ENCODE measurements at regions of chr17 and their contacts with region 1.

Region 1: GRCh38 chr17:78186692-78187595 is at the starts of genes AFMID and TK1:
- DNase-seq: peak; percentile 98 to 100
- H3K4me3 ChIP-seq: peak within 1 kb of the TSS; percentile 87
- H3K4me3 Mint-ChIP-seq: peak within 1 kb of the TSS; percentile 72
- H3K27ac Mint-ChIP-seq: peak within 1 kb of the TSS; percentile 75
- H3K4me1 ChIP-seq: peaks cover 15% of the 10 kb centered on the region
- H3K4me1 Mint-ChIP-seq: peaks cover 22% of the 10 kb centered on the region
- H3K27me3 ChIP-seq: no peaks in the 10 kb centered on the region
- H3K27me3 Mint-ChIP-seq: no peaks in the 10 kb centered on the region
- CTCF ChIP-seq: peak; percentile 65 to 90
- total RNA-seq, gene AFMID: 68.5 and 83.0 TPM in 2 replicates
- total RNA-seq, gene TK1: 171 and 190 TPM in 2 replicates

Region 2: DNA sequence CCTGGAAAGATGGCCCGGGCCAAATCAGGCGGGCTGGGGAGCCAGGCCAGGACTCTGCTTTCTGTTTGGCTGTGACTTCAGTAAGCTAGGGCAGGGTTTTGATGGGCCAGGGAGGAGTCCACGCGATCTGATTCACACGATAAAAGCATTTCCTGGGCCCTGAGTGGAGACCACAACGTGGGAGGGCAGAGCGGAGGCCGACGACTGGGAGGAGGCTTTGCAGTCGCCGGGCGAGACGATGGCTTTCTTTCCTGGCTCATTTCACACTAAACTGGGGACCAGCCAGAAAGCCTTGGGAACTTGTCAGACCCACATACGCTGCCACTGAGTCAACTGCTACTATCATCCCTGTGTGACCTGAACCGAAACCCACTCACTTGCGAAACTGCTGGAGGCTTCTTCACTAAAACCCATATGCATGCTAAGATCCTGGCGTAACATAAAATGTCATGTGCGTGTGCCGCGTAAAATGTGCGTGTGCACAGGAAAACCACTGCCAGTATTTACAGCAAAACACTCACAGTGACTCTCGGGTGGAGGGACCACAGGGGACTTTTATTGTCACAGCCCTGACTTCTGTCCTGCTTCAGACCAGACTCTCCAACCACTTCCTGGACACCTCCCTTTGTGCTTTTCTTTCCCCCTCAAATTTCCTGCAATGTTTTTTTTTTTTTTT is 1671.5 kb before region 1 on chr17:
- CTCF ChIA-PET with region 1: no interaction called
- POLR2A ChIA-PET with region 1: no interaction called
- intact Hi-C with region 1: no loop called
- DNase-seq: no peak
- H3K4me3 ChIP-seq: no peak overlapping the region
- H3K4me3 Mint-ChIP-seq: no peak overlapping the region
- H3K27ac Mint-ChIP-seq: no peak overlapping the region
- H3K4me1 ChIP-seq: no peaks in the 10 kb centered on the region
- H3K4me1 Mint-ChIP-seq: no peaks in the 10 kb centered on the region
- H3K27me3 ChIP-seq: no peaks in the 10 kb centered on the region
- H3K27me3 Mint-ChIP-seq: no peaks in the 10 kb centered on the region
- CTCF ChIP-seq: no peak

Region 3: GRCh38 chr17:78040440-78041385 is 146.2 kb before region 1 on chr17:
- CTCF ChIA-PET with region 1: no interaction called
- POLR2A ChIA-PET with region 1: no interaction called
- intact Hi-C with region 1: no loop called
- DNase-seq: peak; percentile 76 to 77
- H3K4me3 ChIP-seq: peak overlapping the region; percentile 52
- H3K4me3 Mint-ChIP-seq: peak overlapping the region; percentile 83
- H3K27ac Mint-ChIP-seq: peak overlapping the region; percentile 90
- H3K4me1 ChIP-seq: peaks cover 9% of the 10 kb centered on the region
- H3K4me1 Mint-ChIP-seq: peaks cover 5% of the 10 kb centered on the region
- H3K27me3 ChIP-seq: no peaks in the 10 kb centered on the region
- H3K27me3 Mint-ChIP-seq: no peaks in the 10 kb centered on the region
- CTCF ChIP-seq: peak; percentile 16 to 30

Region 4: DNA sequence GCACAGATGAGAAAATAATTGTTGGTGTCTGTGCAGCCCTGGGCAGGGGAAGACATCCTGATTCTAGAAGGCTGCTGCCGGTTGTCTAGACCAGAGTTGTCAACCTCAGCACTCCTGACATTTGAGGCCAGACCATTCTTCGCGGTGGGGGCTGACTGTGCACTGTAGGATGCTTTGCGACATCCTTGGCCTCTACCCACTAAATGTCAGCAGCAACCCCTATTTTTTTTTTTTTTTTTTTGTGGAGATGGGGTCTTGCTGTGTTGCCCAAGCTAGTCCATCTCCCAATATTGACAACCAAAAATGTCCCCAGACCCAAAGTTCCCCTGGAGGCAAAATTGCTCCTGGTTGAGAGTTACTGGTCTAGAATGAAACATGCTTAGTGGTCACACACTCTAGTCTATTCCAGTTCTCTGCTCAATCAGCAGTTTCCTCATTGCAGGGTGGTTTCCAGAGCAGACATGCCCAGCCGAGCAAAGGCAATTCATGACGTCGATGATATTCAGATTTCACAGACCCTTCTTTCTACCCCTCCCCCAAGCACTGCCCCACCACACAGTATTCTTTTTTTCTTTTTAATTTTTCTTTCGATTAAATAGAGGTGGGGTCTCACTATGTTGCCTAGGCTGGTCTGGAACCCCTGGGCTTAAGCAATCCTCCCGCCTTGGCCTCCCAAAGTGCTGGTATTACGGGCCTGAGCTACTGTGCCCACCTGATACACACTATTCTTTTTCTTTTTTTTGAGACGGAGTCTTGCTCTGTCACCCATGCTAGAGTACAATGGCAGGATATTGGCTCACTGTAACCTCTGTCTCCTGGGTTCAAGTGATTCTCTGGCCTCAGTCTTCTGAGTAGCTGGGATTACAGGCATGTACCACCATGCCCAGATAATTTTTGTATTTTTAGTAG is 31.8 kb before region 1 on chr17:
- CTCF ChIA-PET with region 1: interaction called, 5 read pairs
- POLR2A ChIA-PET with region 1: interaction called, 11 read pairs
- intact Hi-C with region 1: no loop called
- DNase-seq: no peak
- H3K4me3 ChIP-seq: no peak overlapping the region
- H3K4me3 Mint-ChIP-seq: no peak overlapping the region
- H3K27ac Mint-ChIP-seq: no peak overlapping the region
- H3K4me1 ChIP-seq: peaks cover 25% of the 10 kb centered on the region
- H3K4me1 Mint-ChIP-seq: peaks cover 11% of the 10 kb centered on the region
- H3K27me3 ChIP-seq: no peaks in the 10 kb centered on the region
- H3K27me3 Mint-ChIP-seq: no peaks in the 10 kb centered on the region
- CTCF ChIP-seq: no peak

Region 5: DNA sequence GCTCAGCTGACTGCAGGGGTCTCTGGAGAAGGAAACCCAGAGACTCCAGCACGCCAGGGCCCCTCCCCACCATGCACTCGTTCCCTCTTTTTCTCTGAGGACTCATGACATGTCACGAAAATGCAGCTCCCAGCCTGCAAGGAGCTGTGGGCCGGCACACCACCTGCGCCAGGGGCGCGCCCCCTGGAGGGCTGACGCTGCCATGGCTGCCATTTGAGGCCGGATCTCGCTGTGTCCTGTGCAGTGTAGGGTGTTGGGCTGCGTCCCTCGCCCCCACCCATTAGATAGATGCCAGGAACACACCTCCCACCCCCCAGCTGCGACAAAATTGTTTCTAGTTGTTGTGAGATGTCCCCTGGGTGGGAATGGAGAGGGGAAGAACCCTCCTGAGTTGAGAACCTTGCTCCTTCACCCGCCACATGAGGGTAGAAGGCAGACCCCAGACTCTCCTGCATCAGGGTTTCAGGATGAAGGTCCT is 10.4 kb before region 1 on chr17:
- CTCF ChIA-PET with region 1: interaction called, 15 read pairs
- POLR2A ChIA-PET with region 1: interaction called, 6 read pairs
- intact Hi-C with region 1: no loop called
- DNase-seq: peak in 1 of 2 experiments; percentile 79
- H3K4me3 ChIP-seq: no peak overlapping the region
- H3K4me3 Mint-ChIP-seq: no peak overlapping the region
- H3K27ac Mint-ChIP-seq: peak overlapping the region; percentile 75
- H3K4me1 ChIP-seq: peaks cover 14% of the 10 kb centered on the region; the same call in 1 of the 2 replicates
- H3K4me1 Mint-ChIP-seq: peaks cover 24% of the 10 kb centered on the region
- H3K27me3 ChIP-seq: no peaks in the 10 kb centered on the region
- H3K27me3 Mint-ChIP-seq: no peaks in the 10 kb centered on the region
- CTCF ChIP-seq: peak; percentile 85 to 86

Region 6: GRCh38 chr17:78206298-78206697 is 19.4 kb after region 1 on chr17:
- CTCF ChIA-PET with region 1: interaction called, 9 read pairs
- POLR2A ChIA-PET with region 1: interaction called, 14 read pairs
- intact Hi-C with region 1: no loop called
- DNase-seq: no peak
- H3K4me3 ChIP-seq: no peak overlapping the region
- H3K4me3 Mint-ChIP-seq: no peak overlapping the region
- H3K27ac Mint-ChIP-seq: no peak overlapping the region
- H3K4me1 ChIP-seq: no peaks in the 10 kb centered on the region
- H3K4me1 Mint-ChIP-seq: no peaks in the 10 kb centered on the region
- H3K27me3 ChIP-seq: no peaks in the 10 kb centered on the region
- H3K27me3 Mint-ChIP-seq: no peaks in the 10 kb centered on the region
- CTCF ChIP-seq: no peak

Region 7: DNA sequence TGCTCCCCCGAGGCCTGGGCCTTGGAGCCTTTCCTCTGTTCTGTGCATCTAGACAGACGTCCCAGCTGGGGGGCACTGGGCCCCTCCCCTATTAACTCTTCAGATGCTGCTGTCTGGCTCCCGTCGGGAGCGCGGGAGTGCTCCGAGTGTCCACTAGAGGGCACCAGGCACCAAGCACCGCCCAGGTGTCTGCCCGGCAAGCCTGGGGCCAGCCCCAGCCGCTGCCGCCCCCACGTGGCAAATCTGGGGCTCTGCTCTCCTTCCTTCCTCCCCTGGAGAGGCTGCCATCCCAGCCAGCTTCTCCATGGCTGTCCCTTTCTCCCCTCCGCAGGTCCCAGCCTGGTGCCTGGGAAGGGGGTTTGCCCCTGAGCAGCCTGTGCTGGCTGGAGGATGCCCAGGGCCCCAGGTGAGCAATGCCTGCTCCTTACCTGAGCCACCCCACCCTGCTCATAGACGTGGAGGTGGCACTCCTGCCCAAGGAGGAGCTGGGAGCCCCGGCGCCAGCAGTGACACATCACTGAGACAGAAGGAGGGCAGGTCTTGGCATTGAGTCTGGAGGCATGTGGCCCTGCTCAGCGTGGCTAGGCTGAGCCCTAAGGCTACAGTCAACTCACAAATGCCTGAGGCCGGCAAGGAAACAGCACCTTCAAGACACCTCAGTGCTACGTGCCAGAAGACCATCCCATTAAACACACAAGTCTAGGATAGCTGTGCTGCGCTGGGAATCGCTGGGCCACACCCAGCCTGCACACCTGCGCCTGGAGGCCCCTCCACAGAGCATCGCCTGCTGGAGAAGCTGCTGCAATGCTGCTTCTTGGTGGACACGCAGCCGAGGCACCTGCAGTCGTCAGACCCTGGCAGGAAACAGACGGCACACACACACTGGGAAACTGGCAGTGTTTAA is 64.2 kb after region 1 on chr17:
- CTCF ChIA-PET with region 1: interaction called, 17 read pairs
- POLR2A ChIA-PET with region 1: interaction called, 3 read pairs
- intact Hi-C with region 1: no loop called
- DNase-seq: peak; percentile 87 to 93
- H3K4me3 ChIP-seq: no peak overlapping the region
- H3K4me3 Mint-ChIP-seq: no peak overlapping the region
- H3K27ac Mint-ChIP-seq: peak overlapping the region; percentile 45
- H3K4me1 ChIP-seq: peaks cover 17% of the 10 kb centered on the region
- H3K4me1 Mint-ChIP-seq: peaks cover 21% of the 10 kb centered on the region
- H3K27me3 ChIP-seq: no peaks in the 10 kb centered on the region
- H3K27me3 Mint-ChIP-seq: no peaks in the 10 kb centered on the region
- CTCF ChIP-seq: peak; percentile 99

Measured in Caco-2 (cell line).